Activated B cell treated with CpG ODN at 0.5 μM for 24 hours (primary cell): ENCODE measurements at regions of chr6 and their contacts with region 1.

Region 1: GRCh38 chr6:52284460-52285176 is at the start of gene MCM3:
- DNase-seq: peak; percentile 83
- ATAC-seq: peak; percentile 98
- H3K4me3 Mint-ChIP-seq: peak within 1 kb of the TSS; percentile 58
- H3K27ac Mint-ChIP-seq: no peak within 1 kb of the TSS
- H3K4me1 Mint-ChIP-seq: peaks cover 20% of the 10 kb centered on the region
- H3K27me3 Mint-ChIP-seq: no peaks in the 10 kb centered on the region
- CTCF ChIP-seq: no peak
- total RNA-seq, gene MCM3: 73.2 and 78.9 TPM in 2 replicates

Region 2: DNA sequence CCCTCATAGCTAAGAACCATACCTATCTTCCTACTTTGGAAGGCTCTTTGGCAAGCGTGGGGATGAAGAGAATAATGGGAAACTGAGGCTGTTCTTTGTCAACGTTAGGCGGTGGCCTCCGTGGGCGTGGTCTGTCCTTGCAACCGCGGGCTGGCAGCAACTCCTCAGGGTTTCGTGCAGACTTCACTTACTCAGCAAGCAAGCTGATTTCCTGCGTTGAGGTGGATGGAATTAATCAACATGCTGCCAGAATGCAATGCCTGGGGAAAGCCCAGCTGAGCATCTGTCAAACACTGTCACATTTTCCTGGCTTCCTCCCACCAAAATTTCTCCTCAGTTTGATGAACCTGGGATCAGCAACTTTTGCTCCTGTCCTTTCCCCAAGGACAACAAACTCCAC is 31.1 kb before region 1 on chr6:
- CTCF ChIA-PET with region 1: no interaction called
- POLR2A ChIA-PET with region 1: no interaction called
- intact Hi-C with region 1: no loop called
- DNase-seq: no peak
- ATAC-seq: no peak
- H3K4me3 Mint-ChIP-seq: no peak overlapping the region
- H3K27ac Mint-ChIP-seq: no peak overlapping the region
- H3K4me1 Mint-ChIP-seq: no peaks in the 10 kb centered on the region
- H3K27me3 Mint-ChIP-seq: peaks cover 22% of the 10 kb centered on the region
- CTCF ChIP-seq: no peak

Region 3: GRCh38 chr6:52297433-52297832 is 12.8 kb after region 1 on chr6:
- CTCF ChIA-PET with region 1: interaction called, 4 read pairs
- POLR2A ChIA-PET with region 1: interaction called, 6 read pairs
- intact Hi-C with region 1: loop called (anchors 1 kb)
- DNase-seq: no peak
- ATAC-seq: peak; percentile 38
- H3K4me3 Mint-ChIP-seq: peak overlapping the region; percentile 76
- H3K27ac Mint-ChIP-seq: peak overlapping the region; percentile 99
- H3K4me1 Mint-ChIP-seq: peaks cover 38% of the 10 kb centered on the region
- H3K27me3 Mint-ChIP-seq: no peaks in the 10 kb centered on the region
- CTCF ChIP-seq: no peak

Region 4: GRCh38 chr6:52352239-52353008 is 67.8 kb after region 1 on chr6:
- CTCF ChIA-PET with region 1: interaction called, 15 read pairs
- POLR2A ChIA-PET with region 1: interaction called, 9 read pairs
- intact Hi-C with region 1: loop called (anchors 2 kb)
- DNase-seq: no peak
- ATAC-seq: peak; percentile 72
- H3K4me3 Mint-ChIP-seq: peak overlapping the region; percentile 3
- H3K27ac Mint-ChIP-seq: peak overlapping the region; percentile 31
- H3K4me1 Mint-ChIP-seq: peaks cover 29% of the 10 kb centered on the region
- H3K27me3 Mint-ChIP-seq: no peaks in the 10 kb centered on the region
- CTCF ChIP-seq: no peak

Region 5: DNA sequence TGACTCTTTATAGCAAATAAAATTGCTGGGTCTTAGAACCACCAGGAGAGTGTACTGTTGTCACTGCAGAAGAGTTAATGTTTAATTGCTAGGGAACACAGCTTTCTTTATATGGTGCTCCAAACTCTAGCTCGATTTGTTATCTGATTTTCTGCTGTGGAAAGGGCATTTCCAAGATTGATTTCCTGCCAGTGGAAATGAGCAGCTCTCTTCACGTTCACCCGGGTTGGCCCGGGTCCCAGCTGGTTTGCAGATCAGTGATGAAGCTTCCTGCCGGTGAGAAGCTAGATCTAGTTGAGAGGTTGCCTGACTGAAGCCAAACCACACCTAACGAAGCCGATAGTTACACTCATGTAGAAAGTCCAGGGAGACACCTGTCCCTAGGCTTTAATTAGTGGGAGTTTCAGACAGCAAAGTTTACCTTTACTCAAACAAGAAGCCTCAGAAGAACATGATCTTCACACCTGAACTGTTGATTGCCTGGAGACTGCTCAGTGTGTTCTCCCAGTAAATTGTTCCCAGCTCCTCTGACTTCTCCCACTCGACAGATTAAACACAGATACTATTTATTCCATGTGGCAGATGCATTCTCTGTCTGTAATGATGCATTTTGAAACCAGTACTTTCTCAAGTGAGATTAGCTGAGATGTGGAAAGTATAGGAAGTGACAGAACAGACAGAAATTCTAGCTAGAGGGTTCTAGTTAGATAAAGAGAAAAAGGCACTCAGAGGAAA is 105.2 kb after region 1 on chr6:
- CTCF ChIA-PET with region 1: interaction called, 13 read pairs
- POLR2A ChIA-PET with region 1: interaction called, 4 read pairs
- intact Hi-C with region 1: no loop called
- DNase-seq: no peak
- ATAC-seq: peak; percentile 26
- H3K4me3 Mint-ChIP-seq: peak overlapping the region; percentile 49
- H3K27ac Mint-ChIP-seq: peak overlapping the region; percentile 59
- H3K4me1 Mint-ChIP-seq: peaks cover 43% of the 10 kb centered on the region
- H3K27me3 Mint-ChIP-seq: no peaks in the 10 kb centered on the region
- CTCF ChIP-seq: no peak

Region 6: GRCh38 chr6:52577022-52577777 is 292.6 kb after region 1 on chr6 and contains the start of gene TRAM2:
- CTCF ChIA-PET with region 1: no interaction called
- POLR2A ChIA-PET with region 1: no interaction called
- intact Hi-C with region 1: loop called (anchors 1 kb)
- DNase-seq: peak; percentile 88
- ATAC-seq: peak; percentile 85
- H3K4me3 Mint-ChIP-seq: peak within 1 kb of the TSS; percentile 87
- H3K27ac Mint-ChIP-seq: peak within 1 kb of the TSS; percentile 83
- H3K4me1 Mint-ChIP-seq: peaks cover 46% of the 10 kb centered on the region
- H3K27me3 Mint-ChIP-seq: no peaks in the 10 kb centered on the region
- CTCF ChIP-seq: no peak
- total RNA-seq, gene TRAM2: 9.1 and 9.9 TPM in 2 replicates

Region 7: DNA sequence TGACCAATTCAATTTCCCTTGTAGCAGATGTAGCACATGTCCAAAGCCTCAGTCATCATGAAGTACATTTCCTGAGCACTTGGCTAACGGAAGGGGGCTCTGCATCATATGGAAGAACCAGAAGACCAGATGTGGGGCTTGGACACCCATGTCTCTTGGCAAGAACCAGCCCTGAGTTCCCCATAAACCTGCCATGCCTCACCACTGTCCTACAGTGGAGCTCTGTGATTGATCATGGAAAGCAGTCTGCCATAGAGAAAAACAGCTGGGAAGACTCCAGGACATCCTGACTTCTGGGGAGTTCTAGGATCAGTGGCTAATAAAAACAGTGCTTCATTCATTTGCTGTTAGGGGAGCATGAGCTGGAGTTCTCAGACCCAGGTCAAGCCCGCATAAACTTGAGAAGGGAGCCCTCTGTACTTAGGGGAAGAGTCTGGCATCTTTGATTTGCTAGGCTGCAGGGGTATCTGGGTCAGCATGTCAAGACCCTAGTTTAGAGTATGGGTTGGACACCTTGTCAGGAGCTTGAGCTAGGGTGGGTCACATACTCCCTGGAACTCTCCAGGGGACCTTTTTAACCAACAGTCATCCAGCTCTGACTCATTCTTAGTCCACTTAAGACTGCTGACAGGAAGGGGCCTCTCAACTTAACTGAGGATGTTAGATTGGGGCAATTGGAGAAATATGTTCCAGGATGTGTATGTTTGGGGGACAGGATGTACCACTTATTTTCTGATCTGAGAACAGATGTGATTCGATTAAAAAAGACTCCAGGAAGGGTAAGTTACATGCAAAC is 318.6 kb after region 1 on chr6:
- CTCF ChIA-PET with region 1: no interaction called
- POLR2A ChIA-PET with region 1: no interaction called
- intact Hi-C with region 1: no loop called
- DNase-seq: no peak
- ATAC-seq: no peak
- H3K4me3 Mint-ChIP-seq: no peak overlapping the region
- H3K27ac Mint-ChIP-seq: no peak overlapping the region
- H3K4me1 Mint-ChIP-seq: peaks cover 2% of the 10 kb centered on the region
- H3K27me3 Mint-ChIP-seq: peaks cover 14% of the 10 kb centered on the region
- CTCF ChIP-seq: no peak

Region 8: GRCh38 chr6:52786249-52786956 is 501.8 kb after region 1 on chr6:
- CTCF ChIA-PET with region 1: no interaction called
- POLR2A ChIA-PET with region 1: no interaction called
- intact Hi-C with region 1: no loop called
- DNase-seq: no peak
- ATAC-seq: no peak
- H3K4me3 Mint-ChIP-seq: no peak overlapping the region
- H3K27ac Mint-ChIP-seq: no peak overlapping the region
- H3K4me1 Mint-ChIP-seq: no peaks in the 10 kb centered on the region
- H3K27me3 Mint-ChIP-seq: peaks cover 14% of the 10 kb centered on the region
- CTCF ChIP-seq: no peak

Region 9: DNA sequence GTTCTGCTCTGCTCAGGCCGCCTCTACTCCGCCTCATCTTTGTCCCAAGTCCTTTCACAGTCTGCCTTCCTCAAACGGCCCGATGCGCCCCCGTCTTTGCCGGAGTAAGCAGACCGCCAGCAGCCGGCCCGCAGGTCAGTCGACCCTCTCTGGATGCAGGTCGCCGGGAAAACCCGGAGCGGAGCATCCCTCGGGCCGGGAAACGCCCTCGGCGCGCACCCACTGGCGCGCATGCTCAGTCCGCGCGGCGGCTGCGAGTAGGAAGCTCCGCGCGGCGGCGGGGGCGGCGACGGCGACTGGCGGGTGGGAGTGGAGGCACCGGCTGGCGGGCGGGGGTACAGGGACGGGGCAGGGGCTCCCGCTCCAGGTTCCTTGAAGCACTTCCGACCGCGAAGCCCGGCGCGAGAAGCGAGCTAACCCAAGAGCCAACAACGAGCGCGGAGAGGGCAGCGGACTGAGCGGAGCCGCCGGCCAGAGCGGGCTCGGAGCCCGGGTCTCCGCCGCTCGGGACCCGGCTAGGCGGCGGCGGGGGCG is 1510.2 kb after region 1 on chr6 and contains the start of gene LRRC1:
- CTCF ChIA-PET with region 1: no interaction called
- POLR2A ChIA-PET with region 1: no interaction called
- intact Hi-C with region 1: loop called (anchors 10 kb)
- DNase-seq: peak; percentile 94
- ATAC-seq: peak; percentile 76
- H3K4me3 Mint-ChIP-seq: peak within 1 kb of the TSS; percentile 99
- H3K27ac Mint-ChIP-seq: peak within 1 kb of the TSS; percentile 91
- H3K4me1 Mint-ChIP-seq: peaks cover 27% of the 10 kb centered on the region
- H3K27me3 Mint-ChIP-seq: peaks cover 2% of the 10 kb centered on the region
- CTCF ChIP-seq: no peak
- total RNA-seq, gene LRRC1: 3.0 and 4.7 TPM in 2 replicates